Left cardiac atrium (tissue), 4 donors: ENCODE measurements at regions of chr20 and their contacts with region 1.

Region 1: GRCh38 chr20:54199721-54200176 is 8.1 kb upstream of the PFDN4 start:
- DNase-seq: peak; percentile 66
- ATAC-seq: peak; percentile 55 to 67

Region 2: GRCh38 chr20:54097236-54097529 is 102.6 kb before region 1 on chr20:
- intact Hi-C with region 1: loop called in 1 of 2 experiments (anchors 2 kb)
- DNase-seq: no peak
- ATAC-seq: no peak

Region 3: GRCh38 chr20:54112221-54112884 is 87.4 kb before region 1 on chr20:
- intact Hi-C with region 1: loop called in 1 of 2 experiments (anchors 5 kb)
- DNase-seq: no peak
- ATAC-seq: peak in 1 of 2 donors; percentile 24

Region 4: GRCh38 chr20:54122681-54123586 is 76.8 kb before region 1 on chr20:
- intact Hi-C with region 1: no loop called
- DNase-seq: no peak
- ATAC-seq: no peak